T-cell (primary cell): ENCODE measurements at regions of chr17 and their contacts with region 1.

Region 1: GRCh38 chr17:64653325-64653984 is 8.7 kb downstream of the SMURF2 start:
- DNase-seq: no peak
- ATAC-seq: no peak
- H3K4me3 ChIP-seq: no peak overlapping the region
- H3K4me3 Mint-ChIP-seq: no peak overlapping the region
- H3K27ac ChIP-seq: no peak overlapping the region
- H3K27ac Mint-ChIP-seq: no peak overlapping the region
- H3K4me1 ChIP-seq: peaks cover 8 to 15% of the 10 kb centered on the region in 2 experiments
- H3K4me1 Mint-ChIP-seq: peaks cover 58 to 62% (median 60%) of the 10 kb centered on the region in 3 donors
- H3K27me3 ChIP-seq: no peaks in the 10 kb centered on the region
- H3K27me3 Mint-ChIP-seq: no peaks in the 10 kb centered on the region

Region 2: DNA sequence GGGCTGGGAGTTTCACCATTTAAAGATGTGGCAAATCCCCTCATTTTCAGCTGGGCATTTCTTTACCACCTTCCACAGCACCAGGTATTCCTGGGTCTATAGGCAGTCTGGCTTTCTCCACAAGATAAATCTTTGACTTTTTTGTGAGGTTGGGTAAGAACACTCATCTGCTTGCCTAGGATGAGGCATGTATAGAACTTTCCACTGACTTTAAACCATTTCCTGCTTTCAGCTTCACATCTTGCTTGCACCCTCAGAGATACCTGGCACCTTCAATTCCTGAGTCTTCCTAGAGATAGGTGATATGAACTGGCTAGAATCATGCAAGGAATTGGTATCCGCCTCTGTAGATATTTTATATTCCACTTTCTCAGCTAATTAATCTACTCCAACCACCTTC is 19.2 kb before region 1 on chr17:
- CTCF ChIA-PET with region 1: interaction called, 3 to 11 read pairs
- POLR2A ChIA-PET with region 1: no interaction called
- DNase-seq: peak in 1 of 35 experiments; percentile 14
- ATAC-seq: peak; percentile 47 to 72 (median 56)
- H3K4me3 ChIP-seq: no peak overlapping the region
- H3K4me3 Mint-ChIP-seq: no peak overlapping the region
- H3K27ac ChIP-seq: no peak overlapping the region
- H3K27ac Mint-ChIP-seq: peak overlapping the region in 1 of 2 donors; percentile 7
- H3K4me1 ChIP-seq: peaks cover 17 to 31% of the 10 kb centered on the region in 2 experiments
- H3K4me1 Mint-ChIP-seq: peaks cover 62 to 79% (median 67%) of the 10 kb centered on the region in 3 donors
- H3K27me3 ChIP-seq: no peaks in the 10 kb centered on the region
- H3K27me3 Mint-ChIP-seq: no peaks in the 10 kb centered on the region

Region 3: GRCh38 chr17:64747938-64748540 is 94.6 kb after region 1 on chr17:
- CTCF ChIA-PET with region 1: no interaction called
- POLR2A ChIA-PET with region 1: no interaction called
- DNase-seq: no peak
- ATAC-seq: no peak
- H3K4me3 ChIP-seq: no peak overlapping the region
- H3K4me3 Mint-ChIP-seq: no peak overlapping the region
- H3K27ac ChIP-seq: no peak overlapping the region
- H3K27ac Mint-ChIP-seq: no peak overlapping the region
- H3K4me1 ChIP-seq: no peaks in the 10 kb centered on the region
- H3K4me1 Mint-ChIP-seq: no peaks in the 10 kb centered on the region
- H3K27me3 ChIP-seq: no peaks in the 10 kb centered on the region
- H3K27me3 Mint-ChIP-seq: no peaks in the 10 kb centered on the region